Activated CD4-positive, alpha-beta memory T cell treated with anti-CD3 and anti-CD28 coated beads for 36 hours (primary cell): ENCODE measurements at regions of chr17 and their contacts with region 1.

Region 1: DNA sequence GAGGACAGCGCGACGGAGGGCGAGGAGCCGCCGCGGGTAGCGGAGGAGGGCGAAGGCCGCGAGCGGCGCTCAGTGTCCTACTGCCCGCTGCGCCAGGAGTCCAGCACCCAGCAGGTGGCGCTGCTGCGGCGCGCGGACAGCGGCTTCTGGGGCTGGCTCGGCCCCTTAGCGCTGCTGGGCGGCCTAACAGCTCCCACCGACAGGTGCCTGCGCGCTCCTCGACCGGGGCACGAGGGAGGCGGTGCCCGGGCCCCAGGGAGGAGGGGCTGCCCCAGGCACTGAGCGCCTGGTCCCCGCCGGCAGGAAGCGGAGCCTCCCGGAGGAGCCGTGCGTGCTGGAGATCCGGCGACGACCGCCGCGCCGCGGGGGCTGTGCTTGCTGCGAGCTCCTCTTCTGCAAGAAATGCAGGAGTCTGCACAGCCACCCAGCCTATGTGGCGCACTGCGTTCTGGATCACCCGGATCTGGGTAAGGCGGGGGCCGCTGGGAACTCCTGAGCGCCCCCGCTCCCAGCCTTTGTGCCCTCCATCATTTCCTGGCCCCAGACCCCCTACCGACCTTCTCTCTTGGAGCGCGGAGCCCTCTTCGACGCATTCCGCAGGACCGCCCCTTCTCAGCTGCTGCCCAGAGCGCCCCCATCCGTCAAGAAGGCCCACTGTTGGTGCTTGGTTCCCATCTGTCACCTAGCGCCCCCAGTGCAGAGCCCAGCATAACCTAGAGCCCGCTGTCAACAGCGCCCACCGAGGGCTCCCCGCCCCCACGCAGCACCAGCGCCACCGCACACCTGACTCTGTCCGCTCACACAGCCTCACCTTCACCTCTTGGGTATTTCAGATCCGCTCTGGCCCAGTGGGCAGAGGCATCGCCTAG is 3.7 kb downstream of the C17orf50 start:
- DNase-seq: peak; percentile 91
- H3K4me3 Mint-ChIP-seq: peak overlapping the region; percentile 81
- H3K27ac Mint-ChIP-seq: peak overlapping the region; percentile 46
- H3K4me1 Mint-ChIP-seq: peaks cover 9% of the 10 kb centered on the region
- H3K27me3 Mint-ChIP-seq: no peaks in the 10 kb centered on the region

Region 2: DNA sequence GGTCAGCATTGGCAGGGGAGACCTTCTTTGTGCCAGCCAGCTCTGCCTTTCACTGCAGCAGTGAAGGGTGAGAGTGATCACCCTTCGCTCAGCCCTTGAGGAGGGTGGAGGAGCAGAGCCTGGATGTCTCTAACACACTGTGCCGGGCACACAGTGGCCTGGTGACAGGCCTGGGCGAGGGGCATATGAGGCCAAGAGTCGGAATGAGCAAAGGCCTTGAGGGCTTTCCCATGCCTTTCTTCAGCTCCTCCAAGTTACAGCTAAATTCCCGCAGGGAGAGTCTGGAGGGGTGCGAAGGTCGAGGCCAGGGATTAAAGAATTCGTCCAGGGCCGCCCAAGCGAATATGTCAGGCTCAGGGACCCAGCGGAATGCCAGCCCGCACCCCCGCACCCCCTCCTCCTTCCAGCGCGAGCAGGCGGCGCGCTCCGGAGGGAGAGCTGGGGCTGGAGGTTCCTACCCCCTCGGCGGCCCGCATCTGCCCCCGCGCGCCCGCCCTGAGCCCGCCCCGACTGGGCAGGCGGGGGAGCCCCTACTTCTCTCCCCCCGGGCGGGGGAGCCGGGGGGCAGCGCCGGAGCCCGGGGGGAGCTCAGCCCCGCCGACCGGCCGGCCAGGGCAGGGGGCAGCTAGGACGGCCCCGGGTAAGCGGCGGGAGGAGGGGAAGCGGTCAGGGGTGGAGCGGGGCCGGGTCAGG is 33.0 kb before region 1 on chr17 and contains the start of gene RASL10B:
- CTCF ChIA-PET with region 1: interaction called, 24 read pairs
- POLR2A ChIA-PET with region 1: no interaction called
- intact Hi-C with region 1: no loop called
- DNase-seq: peak; percentile 63
- H3K4me3 Mint-ChIP-seq: peak within 1 kb of the TSS; percentile 63
- H3K27ac Mint-ChIP-seq: no peak within 1 kb of the TSS
- H3K4me1 Mint-ChIP-seq: peaks cover 10% of the 10 kb centered on the region
- H3K27me3 Mint-ChIP-seq: no peaks in the 10 kb centered on the region
- total RNA-seq, gene RASL10B: 0.26 to 0.73 TPM

Region 3: GRCh38 chr17:35752945-35753764 is 11.2 kb before region 1 on chr17 and contains the start of gene GAS2L2:
- CTCF ChIA-PET with region 1: interaction called, 42 read pairs
- POLR2A ChIA-PET with region 1: no interaction called
- intact Hi-C with region 1: loop called (anchors 1 kb)
- DNase-seq: no peak
- H3K4me3 Mint-ChIP-seq: no peak within 1 kb of the TSS
- H3K27ac Mint-ChIP-seq: no peak within 1 kb of the TSS
- H3K4me1 Mint-ChIP-seq: peaks cover 5% of the 10 kb centered on the region
- H3K27me3 Mint-ChIP-seq: peaks cover 36% of the 10 kb centered on the region
- total RNA-seq, gene GAS2L2: not detected

Region 4: GRCh38 chr17:35788504-35789368 is 24.4 kb after region 1 on chr17:
- CTCF ChIA-PET with region 1: interaction called, 22 read pairs
- POLR2A ChIA-PET with region 1: no interaction called
- intact Hi-C with region 1: no loop called
- DNase-seq: no peak
- H3K4me3 Mint-ChIP-seq: no peak overlapping the region
- H3K27ac Mint-ChIP-seq: no peak overlapping the region
- H3K4me1 Mint-ChIP-seq: peaks cover 3% of the 10 kb centered on the region
- H3K27me3 Mint-ChIP-seq: peaks cover 17% of the 10 kb centered on the region

Region 5: GRCh38 chr17:35819456-35819855 is 55.1 kb after region 1 on chr17:
- CTCF ChIA-PET with region 1: interaction called, 16 read pairs
- POLR2A ChIA-PET with region 1: no interaction called
- intact Hi-C with region 1: no loop called
- DNase-seq: no peak
- H3K4me3 Mint-ChIP-seq: no peak overlapping the region
- H3K27ac Mint-ChIP-seq: no peak overlapping the region
- H3K4me1 Mint-ChIP-seq: peaks cover 32% of the 10 kb centered on the region
- H3K27me3 Mint-ChIP-seq: no peaks in the 10 kb centered on the region

Region 6: GRCh38 chr17:35930211-35931065 is 166.1 kb after region 1 on chr17 and contains the start of gene RDM1:
- CTCF ChIA-PET with region 1: no interaction called
- POLR2A ChIA-PET with region 1: no interaction called
- intact Hi-C with region 1: no loop called
- DNase-seq: peak; percentile 94
- H3K4me3 Mint-ChIP-seq: peak within 1 kb of the TSS; percentile 79
- H3K27ac Mint-ChIP-seq: peak within 1 kb of the TSS; percentile 62
- H3K4me1 Mint-ChIP-seq: peaks cover 23% of the 10 kb centered on the region
- H3K27me3 Mint-ChIP-seq: peaks cover 2% of the 10 kb centered on the region
- total RNA-seq, gene RDM1: 10.4 to 10.6 TPM